Posterior vena cava (tissue), 2 donors: ENCODE measurements at regions of chr11 and their contacts with region 1.

Region 1: GRCh38 chr11:33582636-33583325 is 117.8 kb downstream of the C11orf91 start:
- DNase-seq: no peak

Region 2: DNA sequence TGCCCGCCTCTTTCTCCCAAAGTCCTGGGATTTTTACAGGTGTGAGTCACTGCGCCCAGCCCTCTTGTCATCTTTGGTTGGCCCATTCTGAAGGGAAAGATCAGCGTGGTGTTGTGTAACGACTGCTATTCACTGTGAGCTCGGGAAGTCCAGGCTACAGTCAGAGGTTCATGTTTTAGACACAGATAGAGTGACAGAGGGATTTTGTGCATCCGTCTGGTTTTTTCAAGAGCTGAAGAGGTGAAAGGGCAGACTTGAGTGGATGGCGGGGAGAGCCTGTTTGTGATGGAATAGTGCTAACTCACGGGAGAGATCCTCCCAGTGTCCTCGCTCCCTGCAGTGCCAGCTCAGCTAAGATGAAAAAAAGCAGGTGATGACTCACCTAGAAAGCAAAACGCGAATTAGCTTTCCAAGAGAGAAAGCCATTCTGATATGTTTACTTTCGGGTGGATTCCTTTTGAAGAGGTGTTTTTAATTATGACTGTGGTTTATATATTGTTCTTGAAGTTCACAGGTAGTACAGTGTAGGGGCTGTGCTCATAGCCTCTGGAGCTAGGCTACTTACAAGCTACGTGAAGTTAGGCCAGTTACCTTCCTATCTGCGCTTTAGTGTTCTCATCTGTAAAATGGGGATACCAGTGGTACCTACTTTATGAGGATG is 50.6 kb after region 1 on chr11:
- intact Hi-C with region 1: loop called in 1 of 2 experiments (anchors 5 kb)
- DNase-seq: no peak